CD14-positive monocyte (primary cell): ENCODE measurements at regions of chr11 and their contacts with region 1.

Region 1: DNA sequence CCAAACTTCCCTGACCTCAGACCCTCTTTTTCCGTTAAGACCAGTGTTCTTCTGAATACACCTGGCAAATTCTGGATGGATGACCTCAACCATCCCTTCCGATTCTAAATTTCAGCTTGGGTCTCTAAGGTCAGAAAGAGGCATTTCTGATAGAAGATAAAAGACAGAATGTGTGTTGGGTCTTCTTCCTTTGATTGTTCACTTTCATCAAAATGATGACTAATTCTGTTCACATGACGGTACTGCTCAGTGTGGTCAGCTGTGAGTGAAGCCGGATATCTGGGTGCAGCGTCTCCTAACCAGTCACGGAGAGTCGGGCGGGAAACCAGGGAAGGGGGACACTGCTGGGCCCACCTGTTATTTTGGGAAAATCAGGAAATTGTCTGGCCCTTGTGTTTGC is 151.6 kb upstream of the NAV2 start:
- DNase-seq: no peak
- H3K4me3 ChIP-seq: no peak overlapping the region
- H3K4me3 Mint-ChIP-seq: no peak overlapping the region
- H3K27ac ChIP-seq: no peak overlapping the region
- H3K27ac Mint-ChIP-seq: no peak overlapping the region
- H3K4me1 ChIP-seq: peaks cover 4% of the 10 kb centered on the region in 2 donors
- H3K4me1 Mint-ChIP-seq: peaks cover 6% of the 10 kb centered on the region
- H3K27me3 ChIP-seq: no peaks in the 10 kb centered on the region
- H3K27me3 Mint-ChIP-seq: peaks cover 1 to 17% (median 16%) of the 10 kb centered on the region in 3 donors
- CTCF ChIP-seq: no peak

Region 2: DNA sequence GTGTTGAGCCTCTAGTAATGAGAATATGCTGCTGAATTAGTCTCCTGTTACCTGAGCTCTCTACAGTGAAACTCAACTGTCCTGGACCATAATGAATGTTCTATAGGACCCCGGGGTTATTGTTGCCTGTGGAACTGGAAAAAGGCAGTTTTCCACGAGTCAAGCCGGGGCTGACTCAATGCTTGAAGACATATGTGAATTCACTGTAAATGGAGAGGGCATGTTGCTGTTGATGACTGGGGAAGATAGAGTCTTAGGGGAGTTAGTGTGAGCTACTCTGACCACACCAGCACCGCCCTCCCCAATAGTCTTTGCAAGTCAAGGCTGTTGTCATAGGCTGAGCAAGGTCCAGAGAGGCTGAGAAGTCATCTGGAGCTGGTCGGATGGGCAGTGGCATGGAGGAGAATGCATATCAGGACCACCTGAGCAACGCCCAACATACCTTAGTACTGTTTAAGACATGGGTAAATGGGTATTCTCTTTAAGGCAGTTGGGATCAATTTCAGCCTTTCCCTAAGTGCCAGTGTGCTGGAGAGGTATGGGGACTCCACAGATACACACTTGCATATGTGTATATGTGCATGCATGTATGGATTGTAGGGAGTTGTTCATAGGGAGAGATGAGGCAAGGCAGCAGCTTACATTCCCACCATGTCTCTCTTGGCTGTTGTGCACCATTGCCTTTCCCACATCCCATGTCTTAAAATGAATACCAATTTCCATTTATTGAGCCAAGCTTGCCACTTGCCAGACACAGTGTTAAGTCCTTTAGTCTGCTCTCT is 78.5 kb before region 1 on chr11:
- intact Hi-C with region 1: no loop called
- DNase-seq: no peak
- H3K4me3 ChIP-seq: no peak overlapping the region
- H3K4me3 Mint-ChIP-seq: no peak overlapping the region
- H3K27ac ChIP-seq: no peak overlapping the region
- H3K27ac Mint-ChIP-seq: no peak overlapping the region
- H3K4me1 ChIP-seq: no peaks in the 10 kb centered on the region
- H3K4me1 Mint-ChIP-seq: no peaks in the 10 kb centered on the region
- H3K27me3 ChIP-seq: no peaks in the 10 kb centered on the region
- H3K27me3 Mint-ChIP-seq: peaks cover 0 to 3% (median 2%) of the 10 kb centered on the region in 3 donors
- CTCF ChIP-seq: no peak

Region 3: DNA sequence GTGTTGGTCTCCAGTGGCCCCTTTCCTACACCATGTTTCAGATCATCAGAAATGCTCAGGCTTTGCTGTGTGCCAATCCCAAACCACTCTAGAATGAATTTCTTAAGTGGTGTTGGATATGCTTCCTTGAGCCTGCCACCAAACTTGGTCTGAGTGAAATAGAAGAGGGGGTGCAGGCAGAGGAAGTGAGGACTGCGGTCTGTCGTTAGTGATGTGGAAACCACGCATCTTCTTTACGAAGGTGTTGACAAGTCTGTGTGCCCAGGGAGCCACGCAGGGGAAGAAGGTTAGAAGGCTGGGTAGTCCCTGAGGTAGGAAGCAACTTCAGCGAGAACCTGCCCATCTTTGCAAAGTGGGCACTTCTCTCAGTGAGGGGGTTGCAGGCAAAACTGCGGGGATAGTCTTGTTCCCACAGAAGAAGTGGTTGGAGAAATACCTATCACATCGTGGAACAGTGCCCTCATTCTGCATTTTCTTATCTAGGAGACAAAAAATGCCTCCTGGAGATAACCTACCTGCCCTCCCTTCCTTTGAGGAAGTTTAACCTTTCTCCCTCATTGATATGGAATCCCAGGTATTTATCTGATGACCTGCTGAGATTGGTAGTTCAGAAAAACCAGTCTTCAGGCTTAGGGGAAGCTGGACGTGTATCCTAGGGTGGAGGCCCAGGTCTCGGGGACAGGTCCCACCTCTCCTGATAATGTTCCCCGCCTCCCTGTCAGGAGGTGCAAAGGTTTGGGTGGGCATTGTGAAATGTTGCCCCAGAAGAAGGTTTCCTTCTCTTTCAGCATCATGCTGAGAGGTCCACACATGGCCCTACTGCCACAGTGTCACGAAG is 35.5 kb before region 1 on chr11:
- intact Hi-C with region 1: no loop called
- DNase-seq: no peak
- H3K4me3 ChIP-seq: no peak overlapping the region
- H3K4me3 Mint-ChIP-seq: no peak overlapping the region
- H3K27ac ChIP-seq: no peak overlapping the region
- H3K27ac Mint-ChIP-seq: no peak overlapping the region
- H3K4me1 ChIP-seq: no peaks in the 10 kb centered on the region
- H3K4me1 Mint-ChIP-seq: no peaks in the 10 kb centered on the region
- H3K27me3 ChIP-seq: no peaks in the 10 kb centered on the region
- H3K27me3 Mint-ChIP-seq: peaks cover 0 to 5% (median 5%) of the 10 kb centered on the region in 3 donors
- CTCF ChIP-seq: no peak

Region 4: DNA sequence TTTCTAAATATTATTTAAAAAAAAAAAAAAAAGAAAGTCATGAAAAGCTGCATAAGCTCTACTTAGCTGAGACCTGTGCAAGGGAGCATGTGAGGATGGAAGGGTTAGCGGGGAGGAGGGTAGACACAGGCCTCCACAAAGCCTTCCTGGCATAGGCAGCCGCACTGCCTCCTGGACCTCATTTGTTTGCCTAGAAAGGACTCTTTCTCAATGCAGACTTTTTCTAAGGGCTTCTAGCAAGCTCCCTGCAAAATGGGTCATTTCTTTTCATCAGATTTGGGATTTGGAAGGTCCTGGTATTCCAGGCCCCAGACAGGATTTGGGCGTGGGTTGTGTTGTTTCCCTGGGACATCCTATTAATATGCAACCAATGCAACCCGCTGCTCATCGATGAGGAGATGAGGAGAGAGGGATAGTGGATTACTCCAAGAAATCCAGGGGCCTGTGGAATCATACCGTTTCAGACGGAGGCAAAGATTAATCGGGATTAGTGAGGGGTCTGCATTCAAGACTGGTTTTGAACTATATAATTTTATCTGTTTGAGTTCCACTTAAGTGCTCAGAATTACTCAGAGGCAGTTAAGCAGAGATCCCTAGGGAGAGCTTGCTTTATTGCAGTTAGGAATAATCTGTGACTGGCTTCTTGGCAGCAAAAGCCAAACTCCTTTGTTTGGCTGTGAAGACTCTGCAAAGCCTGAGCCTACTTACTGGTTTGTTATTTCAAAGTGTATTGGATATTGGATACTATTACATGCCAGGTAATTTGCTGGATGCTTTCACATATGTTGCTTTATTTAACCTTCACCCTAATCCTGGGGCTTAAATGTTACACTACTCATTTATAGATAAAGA is 44.7 kb after region 1 on chr11:
- intact Hi-C with region 1: no loop called
- DNase-seq: no peak
- H3K4me3 ChIP-seq: no peak overlapping the region
- H3K4me3 Mint-ChIP-seq: no peak overlapping the region
- H3K27ac ChIP-seq: no peak overlapping the region
- H3K27ac Mint-ChIP-seq: no peak overlapping the region
- H3K4me1 ChIP-seq: peaks cover 3 to 4% of the 10 kb centered on the region in 2 donors
- H3K4me1 Mint-ChIP-seq: no peaks in the 10 kb centered on the region
- H3K27me3 ChIP-seq: no peaks in the 10 kb centered on the region
- H3K27me3 Mint-ChIP-seq: peaks cover 3 to 16% (median 4%) of the 10 kb centered on the region in 3 donors
- CTCF ChIP-seq: no peak

Region 5: DNA sequence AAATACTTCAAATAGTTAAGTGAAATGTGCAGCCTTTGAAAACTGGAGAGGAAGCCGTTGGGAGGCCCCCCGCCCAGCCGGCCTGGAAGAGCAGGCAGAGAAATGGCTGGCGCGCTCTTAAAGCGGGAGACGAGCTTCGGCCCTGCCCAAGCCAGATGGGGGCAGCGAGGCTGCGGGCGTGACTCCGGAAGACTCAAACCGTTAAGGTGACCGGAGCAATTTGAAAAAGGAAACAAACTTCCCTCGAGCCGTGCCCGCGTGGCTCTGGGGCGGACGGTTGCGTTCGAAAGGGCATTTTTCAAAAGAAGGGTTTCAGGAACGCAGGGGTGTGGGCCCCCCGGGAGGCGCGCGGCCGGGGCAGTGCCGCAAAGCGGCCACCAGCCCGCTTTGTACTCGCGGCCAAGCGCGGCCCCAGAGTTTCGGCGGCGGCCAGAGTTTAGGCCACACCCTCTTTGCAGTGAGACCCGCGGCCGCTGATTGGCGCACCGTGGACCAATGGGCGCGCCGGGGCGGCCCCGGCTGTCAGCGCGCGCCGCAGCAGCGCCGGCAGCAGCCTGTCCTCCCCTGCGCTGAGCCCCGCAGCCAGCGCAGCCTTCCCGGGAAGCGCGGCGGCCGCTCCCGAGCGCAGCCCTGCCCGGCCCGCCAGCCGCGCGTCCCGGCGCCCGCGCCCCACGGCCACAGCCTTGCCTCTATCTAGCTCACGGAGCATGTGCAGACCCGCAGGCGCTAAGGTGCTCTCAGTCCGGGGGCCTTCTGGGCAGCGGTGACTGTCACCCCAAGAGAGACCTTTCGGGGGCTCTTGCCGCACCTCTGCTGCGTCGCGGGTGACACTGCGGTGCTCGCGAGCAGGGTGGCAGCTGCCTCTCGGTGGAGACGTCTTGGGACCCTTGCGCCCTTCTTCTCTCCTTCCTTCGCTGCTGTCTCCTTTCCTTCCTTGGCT is 151.5 kb after region 1 on chr11 and contains the start of gene NAV2:
- intact Hi-C with region 1: no loop called
- DNase-seq: peak; percentile 72 to 81 (median 80)
- H3K4me3 ChIP-seq: peak within 1 kb of the TSS; percentile 51 to 90 (median 69)
- H3K4me3 Mint-ChIP-seq: peak within 1 kb of the TSS; percentile 97 to 98
- H3K27ac ChIP-seq: peak within 1 kb of the TSS; percentile 33 to 71
- H3K27ac Mint-ChIP-seq: peak within 1 kb of the TSS; percentile 67 to 91 (median 83)
- H3K4me1 ChIP-seq: peaks cover 26 to 33% of the 10 kb centered on the region in 2 donors
- H3K4me1 Mint-ChIP-seq: peaks cover 31% of the 10 kb centered on the region
- H3K27me3 ChIP-seq: peaks cover 31 to 41% of the 10 kb centered on the region in 2 donors
- H3K27me3 Mint-ChIP-seq: peaks cover 34 to 54% (median 41%) of the 10 kb centered on the region in 3 donors
- CTCF ChIP-seq: no peak
- polyA plus RNA-seq, gene NAV2: not detected

Region 6: DNA sequence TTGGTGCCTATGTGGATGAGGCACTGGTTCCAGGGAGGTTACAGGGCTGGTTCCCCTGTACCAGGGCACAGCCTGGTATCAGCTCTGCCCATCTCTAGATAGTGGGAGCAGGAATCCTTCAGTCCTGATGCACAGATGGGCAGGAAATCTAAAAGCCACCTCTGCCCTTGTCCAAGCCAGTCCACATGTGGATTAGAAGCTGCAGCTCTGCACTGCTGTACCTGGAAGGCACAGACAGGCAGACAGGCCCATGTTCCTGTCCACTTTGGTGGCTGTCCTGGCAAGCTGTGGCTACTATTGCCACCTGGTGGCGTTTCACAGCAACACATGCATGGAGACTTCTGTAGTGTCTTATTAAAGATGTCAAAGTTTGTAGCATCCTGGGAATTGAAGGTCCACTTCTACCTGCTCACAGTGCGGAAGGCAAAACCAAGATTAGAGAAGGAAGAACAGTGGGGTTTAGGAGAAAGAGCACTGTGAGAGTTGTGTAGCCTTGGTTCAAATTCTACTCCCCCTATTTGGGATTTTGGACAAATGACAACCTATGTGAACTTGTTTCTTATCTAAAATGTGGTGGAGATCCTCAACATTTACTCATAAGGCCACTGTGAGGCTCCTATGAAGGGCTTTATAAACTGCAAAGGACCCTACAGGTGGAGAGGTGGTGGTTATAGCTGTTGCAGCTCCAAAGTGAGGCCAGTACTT is 181.7 kb after region 1 on chr11:
- intact Hi-C with region 1: loop called (anchors 1 to 2 kb)
- DNase-seq: peak; percentile 38 to 62 (median 62)
- H3K4me3 ChIP-seq: no peak overlapping the region
- H3K4me3 Mint-ChIP-seq: no peak overlapping the region
- H3K27ac ChIP-seq: no peak overlapping the region
- H3K27ac Mint-ChIP-seq: peak overlapping the region in 1 of 7 donors; percentile 54
- H3K4me1 ChIP-seq: no peaks in the 10 kb centered on the region
- H3K4me1 Mint-ChIP-seq: no peaks in the 10 kb centered on the region
- H3K27me3 ChIP-seq: no peaks in the 10 kb centered on the region
- H3K27me3 Mint-ChIP-seq: peaks cover 0 to 4% (median 1%) of the 10 kb centered on the region in 3 donors
- CTCF ChIP-seq: peak; percentile 87